Brain microvascular endothelial cell (primary cell): ENCODE measurements at regions of chr1 and their contacts with region 1.

Region 1: DNA sequence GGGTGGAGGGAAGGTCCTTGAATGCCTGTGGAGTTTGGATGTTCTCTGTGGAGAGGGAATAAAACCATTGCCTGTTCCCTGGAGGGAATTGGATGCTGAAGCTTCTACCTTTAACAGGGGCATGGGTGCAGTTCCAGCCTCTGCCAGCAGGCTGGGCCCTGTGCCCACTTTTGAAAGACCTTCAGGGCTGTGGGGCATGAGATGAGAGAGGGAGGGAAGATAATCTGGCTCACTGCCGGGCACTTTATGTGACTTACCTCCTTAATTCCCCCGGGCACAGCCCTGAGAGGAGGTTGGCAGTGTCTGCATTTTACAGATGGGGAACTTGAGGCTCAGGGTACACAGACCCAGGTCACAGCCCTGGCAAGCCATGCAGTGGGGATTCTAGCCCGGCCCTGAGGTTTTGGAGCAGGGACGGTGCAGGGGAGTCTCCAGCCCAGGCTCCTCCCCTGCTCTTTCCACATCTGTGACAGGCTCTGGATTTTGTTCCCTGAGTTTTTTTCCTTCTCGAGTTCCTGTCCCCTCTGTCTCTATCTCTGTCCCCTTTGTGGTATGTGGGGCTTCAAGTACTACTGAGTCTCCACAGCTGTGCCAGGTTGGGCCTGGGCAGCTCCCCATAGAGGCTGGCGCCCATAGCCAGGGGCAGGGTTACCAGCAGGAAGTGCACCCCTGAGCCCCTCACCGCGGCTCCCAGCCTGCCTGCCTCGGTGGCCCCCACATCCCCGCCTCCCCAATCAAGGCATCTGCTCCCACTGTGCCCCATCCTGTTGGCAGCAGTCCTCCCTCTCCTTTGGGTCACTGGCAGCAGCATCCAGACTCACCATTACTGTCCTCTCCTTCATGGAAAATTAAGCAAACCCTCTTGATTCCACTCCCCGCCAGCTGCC is 14.0 kb upstream of the THEMIS2 start:
- DNase-seq: peak; percentile 82
- H3K4me3 ChIP-seq: no peak overlapping the region
- H3K27ac ChIP-seq: no peak overlapping the region
- H3K27me3 ChIP-seq: no peaks in the 10 kb centered on the region
- CTCF ChIP-seq: peak; percentile 99

Region 2: GRCh38 chr1:27906759-27907158 is 48.4 kb after region 1 on chr1:
- in situ Hi-C with region 1: no loop called
- DNase-seq: no peak
- H3K4me3 ChIP-seq: no peak overlapping the region
- H3K27ac ChIP-seq: no peak overlapping the region
- H3K27me3 ChIP-seq: no peaks in the 10 kb centered on the region
- CTCF ChIP-seq: no peak

Region 3: DNA sequence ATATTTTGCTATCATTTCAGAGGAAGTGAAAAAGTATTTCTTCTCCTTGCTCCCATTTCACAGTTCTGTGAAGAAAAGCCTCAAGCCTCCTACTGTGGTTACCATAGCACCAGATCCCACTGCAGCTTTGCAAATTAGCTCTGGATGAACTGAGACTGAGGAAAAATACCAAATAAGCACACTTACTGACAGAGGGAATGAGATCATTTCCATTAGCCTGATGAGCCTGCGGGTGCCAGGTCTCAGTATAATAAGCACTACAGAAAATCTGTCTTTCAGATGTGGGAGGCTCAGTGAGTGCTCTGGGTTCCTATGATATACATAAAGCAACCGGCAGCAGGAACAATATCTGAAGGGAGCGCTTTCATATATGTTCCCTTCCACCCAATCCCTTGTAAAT is 122.8 kb after region 1 on chr1:
- in situ Hi-C with region 1: loop called (anchors 10 kb)
- DNase-seq: no peak
- H3K4me3 ChIP-seq: no peak overlapping the region
- H3K27ac ChIP-seq: no peak overlapping the region
- H3K27me3 ChIP-seq: no peaks in the 10 kb centered on the region
- CTCF ChIP-seq: no peak